OCI-LY7 (cell line): ENCODE measurements at regions of chrX and their contacts with region 1.

Region 1: GRCh38 chrX:66015152-66015831 is 24.6 kb downstream of the VSIG4 start:
- DNase-seq: peak; percentile 80
- H3K4me3 ChIP-seq: peak overlapping the region; percentile 44
- H3K27ac ChIP-seq: peak overlapping the region; percentile 86
- H3K4me1 ChIP-seq: peaks cover 60% of the 10 kb centered on the region
- CTCF ChIP-seq: no peak

Region 2: DNA sequence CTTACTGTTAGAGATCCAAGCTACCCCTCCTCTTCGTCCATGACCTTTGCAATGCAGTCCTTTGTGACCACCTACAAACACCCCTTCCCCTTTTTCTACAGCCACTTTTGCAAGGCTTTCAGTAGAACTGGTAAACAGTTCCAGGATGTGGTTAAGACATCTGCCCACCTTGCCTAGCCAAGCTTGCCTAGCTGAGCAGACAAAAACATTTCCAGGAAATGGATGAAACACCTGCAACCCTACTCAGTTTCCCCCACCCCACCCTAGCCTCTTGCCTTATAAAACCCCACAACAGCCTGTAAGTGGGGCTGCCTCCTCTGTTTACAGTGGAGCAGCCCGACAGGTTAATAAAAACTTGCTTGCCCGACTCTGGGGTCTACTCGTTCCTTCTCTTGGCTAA is 1172.8 kb before region 1 on chrX:
- CTCF ChIA-PET with region 1: no interaction called
- POLR2A ChIA-PET with region 1: no interaction called
- intact Hi-C with region 1: loop called (anchors 10 kb)
- DNase-seq: peak; percentile 91
- H3K4me3 ChIP-seq: peak overlapping the region; percentile 57
- H3K27ac ChIP-seq: peak overlapping the region; percentile 100
- H3K4me1 ChIP-seq: peaks cover 35% of the 10 kb centered on the region
- CTCF ChIP-seq: no peak

Region 3: GRCh38 chrX:65697915-65698796 is 317.1 kb before region 1 on chrX:
- CTCF ChIA-PET with region 1: no interaction called
- POLR2A ChIA-PET with region 1: interaction called, 5 read pairs
- intact Hi-C with region 1: loop called (anchors 2 kb)
- DNase-seq: peak; percentile 87
- H3K4me3 ChIP-seq: peak overlapping the region; percentile 58
- H3K27ac ChIP-seq: peak overlapping the region; percentile 100
- H3K4me1 ChIP-seq: peaks cover 90% of the 10 kb centered on the region
- CTCF ChIP-seq: no peak

Region 4: GRCh38 chrX:66046612-66047235 is 31.4 kb after region 1 on chrX:
- CTCF ChIA-PET with region 1: no interaction called
- POLR2A ChIA-PET with region 1: interaction called, 7 read pairs
- intact Hi-C with region 1: loop called (anchors 5 kb)
- DNase-seq: peak; percentile 74
- H3K4me3 ChIP-seq: peak overlapping the region; percentile 17
- H3K27ac ChIP-seq: peak overlapping the region; percentile 50
- H3K4me1 ChIP-seq: peaks cover 34% of the 10 kb centered on the region
- CTCF ChIP-seq: no peak

Region 5: GRCh38 chrX:67734111-67734753 is 1718.9 kb after region 1 on chrX:
- CTCF ChIA-PET with region 1: no interaction called
- POLR2A ChIA-PET with region 1: no interaction called
- intact Hi-C with region 1: loop called (anchors 10 kb)
- DNase-seq: peak; percentile 1
- H3K4me3 ChIP-seq: no peak overlapping the region
- H3K27ac ChIP-seq: no peak overlapping the region
- H3K4me1 ChIP-seq: no peaks in the 10 kb centered on the region
- CTCF ChIP-seq: no peak